WTC11 (cell line): ENCODE measurements at regions of chr20 and their contacts with region 1.

Region 1: GRCh38 chr20:36591854-36592641 is 13.5 kb upstream of the RAB5IF start:
- DNase-seq: peak; percentile 45
- ATAC-seq: peak; percentile 65
- H3K4me3 Mint-ChIP-seq: no peak overlapping the region
- H3K27ac Mint-ChIP-seq: peak overlapping the region; percentile 84
- H3K4me1 Mint-ChIP-seq: peaks cover 34% of the 10 kb centered on the region
- H3K27me3 Mint-ChIP-seq: no peaks in the 10 kb centered on the region
- CTCF ChIP-seq: no peak

Region 2: DNA sequence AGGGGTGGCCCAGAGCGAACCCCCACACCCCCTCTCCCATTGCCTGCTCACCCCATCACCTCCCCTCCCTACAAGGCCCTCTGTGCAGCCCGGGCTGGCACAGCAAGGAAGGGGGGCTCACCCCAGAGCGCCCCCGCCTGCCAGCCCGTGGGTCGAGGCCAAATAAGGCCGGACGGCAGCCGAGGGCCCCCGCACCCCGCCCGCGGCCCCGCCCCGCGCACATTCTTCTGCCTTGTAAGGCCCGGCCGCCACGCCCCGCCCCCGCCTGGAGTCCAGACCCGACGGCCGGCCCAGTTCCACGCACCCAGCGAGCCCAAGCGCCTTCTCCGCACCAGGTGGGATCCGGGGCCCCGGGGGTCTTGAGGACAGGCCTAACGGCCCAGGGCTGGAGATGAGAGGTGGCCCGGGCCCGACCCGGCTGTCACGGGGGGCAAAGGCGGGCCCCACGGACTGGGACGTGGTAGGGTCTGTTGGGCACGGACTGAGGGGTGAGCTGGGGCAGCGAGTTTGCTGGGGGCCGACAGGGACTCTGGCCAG is 50.8 kb before region 1 on chr20 and contains the start of gene MYL9:
- CTCF ChIA-PET with region 1: interaction called, 15 read pairs
- POLR2A ChIA-PET with region 1: no interaction called
- DNase-seq: peak; percentile 82
- ATAC-seq: peak; percentile 56
- H3K4me3 Mint-ChIP-seq: peak within 1 kb of the TSS; percentile 62
- H3K27ac Mint-ChIP-seq: peak within 1 kb of the TSS; percentile 77; the same call in 1 of the 2 replicates
- H3K4me1 Mint-ChIP-seq: peaks cover 44% of the 10 kb centered on the region
- H3K27me3 Mint-ChIP-seq: no peaks in the 10 kb centered on the region
- CTCF ChIP-seq: no peak
- total RNA-seq, gene MYL9: 52.5 to 57.7 TPM (median 54.7 TPM) in 3 replicates

Region 3: DNA sequence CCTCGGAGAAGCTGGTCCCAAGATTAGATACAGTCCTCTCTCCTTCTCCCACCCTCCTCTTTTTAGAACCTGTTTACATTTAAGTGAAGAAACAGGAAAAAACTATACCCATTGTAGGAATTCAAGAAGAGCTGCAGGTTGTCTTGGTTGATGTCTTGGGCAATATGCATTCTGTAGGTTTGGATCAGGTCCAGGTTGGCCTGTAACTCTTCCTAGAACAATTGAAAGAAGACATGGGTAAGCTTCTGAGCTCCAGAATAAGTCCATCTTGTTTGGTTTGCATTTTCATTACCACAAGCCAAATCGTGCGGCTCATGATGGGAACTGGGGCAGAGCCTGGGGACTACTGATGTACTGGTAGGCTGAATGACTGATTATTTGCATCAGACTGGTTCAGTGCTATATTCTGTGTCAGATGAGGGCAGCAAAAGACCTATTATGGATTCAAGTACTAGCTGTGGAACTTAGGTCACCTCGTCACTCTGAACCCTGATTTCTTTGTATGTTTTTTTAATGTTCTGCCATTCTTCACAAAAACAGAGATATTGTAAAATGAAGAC is 74.2 kb after region 1 on chr20:
- CTCF ChIA-PET with region 1: no interaction called
- POLR2A ChIA-PET with region 1: no interaction called
- DNase-seq: no peak
- ATAC-seq: no peak
- H3K4me3 Mint-ChIP-seq: no peak overlapping the region
- H3K27ac Mint-ChIP-seq: no peak overlapping the region
- H3K4me1 Mint-ChIP-seq: no peaks in the 10 kb centered on the region
- H3K27me3 Mint-ChIP-seq: no peaks in the 10 kb centered on the region
- CTCF ChIP-seq: no peak